ENCODE measurements at regions of chr3 and their contacts with region 1.

Region 1: DNA sequence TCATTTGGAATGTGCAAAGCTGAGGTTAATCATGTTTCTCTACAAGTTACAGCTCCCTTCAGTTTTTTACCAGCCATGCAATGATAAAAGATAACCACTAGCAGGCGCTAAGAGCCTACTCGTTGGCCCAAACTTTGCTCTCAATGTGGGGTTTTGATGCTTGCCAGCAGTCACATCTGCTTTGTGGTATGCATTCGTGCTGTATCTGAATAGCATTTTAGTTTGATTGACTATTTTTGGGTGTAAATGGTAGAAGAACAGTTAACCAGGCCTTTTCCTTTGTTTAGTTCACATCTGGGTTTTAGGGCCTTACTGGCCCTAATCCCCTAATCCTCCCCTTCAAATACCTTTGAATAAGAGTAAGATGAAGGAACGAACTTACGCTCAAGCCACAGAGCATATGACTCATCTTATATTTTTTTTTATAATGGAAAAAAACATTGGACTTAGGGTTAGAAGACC is 4.4 kb upstream of the CLDN11 start:
- DNase-seq: peak in 1 of 3 donors; percentile 34
- ATAC-seq: peak; percentile 82
- H3K4me3 ChIP-seq: no peak overlapping the region
- H3K4me1 ChIP-seq: peaks cover 11% of the 10 kb centered on the region
- CTCF ChIP-seq: peak; percentile 76

Region 2: DNA sequence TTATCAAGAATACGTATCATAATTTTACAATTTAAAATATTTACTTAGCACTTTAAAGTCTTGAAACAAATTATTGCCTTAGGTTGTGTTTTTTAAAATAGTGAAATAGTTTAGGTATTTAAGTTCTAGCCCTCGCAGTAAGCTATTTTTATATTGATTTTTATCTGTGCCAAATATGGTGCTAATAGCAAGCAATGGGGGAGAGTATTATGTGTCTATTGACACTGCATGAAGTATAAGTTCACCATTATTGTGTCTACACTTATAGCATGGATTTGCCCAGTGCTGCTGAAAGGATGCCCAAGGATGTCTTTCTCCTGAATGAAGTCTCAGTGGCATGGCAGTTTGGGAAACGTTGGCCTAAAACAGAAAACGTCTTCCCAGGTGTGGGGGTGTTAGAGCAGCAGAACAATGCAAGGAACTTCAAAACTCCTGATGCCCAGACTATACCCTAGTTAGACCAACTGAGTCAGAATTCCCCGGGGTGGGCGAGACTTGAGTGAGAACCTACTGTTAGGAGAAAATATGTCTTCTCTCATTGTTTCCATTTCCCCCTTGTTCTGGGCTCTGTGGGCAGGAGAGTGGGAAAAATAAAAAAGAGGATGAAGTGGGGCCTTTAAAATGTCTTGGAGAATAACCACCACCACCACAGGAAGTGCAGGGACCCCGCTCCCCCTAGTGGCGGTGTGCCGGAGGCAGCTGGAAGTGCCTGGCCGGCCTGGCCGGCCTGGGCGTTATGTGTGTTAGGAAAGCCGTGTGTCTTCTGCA is 275.8 kb after region 1 on chr3:
- intact Hi-C with region 1: loop called in 1 of 2 experiments (anchors 5 kb)
- DNase-seq: peak; percentile 53 to 84 (median 82)
- ATAC-seq: peak; percentile 82
- H3K4me3 ChIP-seq: no peak overlapping the region
- H3K4me1 ChIP-seq: no peaks in the 10 kb centered on the region
- CTCF ChIP-seq: peak; percentile 63

Region 3: GRCh38 chr3:170811928-170812591 is 397.8 kb after region 1 on chr3:
- intact Hi-C with region 1: loop called (anchors 5 to 10 kb)
- DNase-seq: peak in 2 of 3 donors; percentile 49 to 81
- ATAC-seq: peak; percentile 78
- H3K4me3 ChIP-seq: no peak overlapping the region
- H3K4me1 ChIP-seq: peaks cover 5% of the 10 kb centered on the region
- CTCF ChIP-seq: peak; percentile 84